ENCODE measurements at regions of chr10 and their contacts with region 1.

Region 1: DNA sequence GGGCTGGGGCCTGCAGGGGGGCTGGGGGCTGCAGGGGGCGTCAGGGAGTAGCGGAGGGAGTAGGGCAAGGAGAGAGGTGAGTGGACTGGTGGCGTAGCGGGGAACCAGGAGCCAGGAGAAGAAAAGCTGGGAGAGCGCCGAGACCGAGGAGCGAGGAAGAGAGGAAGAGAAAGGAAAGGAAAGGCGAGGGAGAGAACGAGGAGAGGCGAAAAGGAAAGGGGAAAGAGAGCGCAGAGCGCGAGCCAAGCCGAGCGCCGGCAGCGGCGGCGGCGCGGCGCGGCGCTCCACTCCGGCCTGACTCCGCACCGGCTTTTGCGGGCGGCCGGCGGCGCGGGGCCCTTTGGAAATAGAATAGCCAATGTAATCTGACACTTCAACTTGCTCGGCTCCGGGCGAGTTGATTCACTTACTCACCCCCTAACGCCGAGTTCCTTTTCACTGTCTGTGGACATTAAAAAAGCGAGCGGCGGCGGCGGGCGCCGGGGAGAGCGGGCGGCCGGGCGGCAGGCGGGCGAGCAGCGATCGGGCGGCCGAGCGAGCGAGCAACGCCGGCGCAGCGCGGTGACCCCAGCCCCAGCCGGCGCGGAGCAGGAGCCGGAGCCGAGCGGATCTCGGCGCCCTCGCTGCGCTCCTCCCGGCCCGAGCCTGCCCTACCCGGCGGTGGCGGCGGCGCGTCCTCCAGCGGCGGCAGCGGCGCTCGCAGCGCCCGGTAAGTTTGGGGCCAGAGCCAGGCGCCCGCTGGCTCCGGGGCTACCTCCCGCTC is at the start of gene ZMIZ1:
- ATAC-seq: peak; percentile 20 to 62 (median 36)
- H3K4me3 ChIP-seq: peak within 1 kb of the TSS; percentile 59 to 88 (median 69)
- H3K27ac ChIP-seq: peak within 1 kb of the TSS; percentile 79 to 87
- H3K4me1 ChIP-seq: peaks cover 32 to 34% of the 10 kb centered on the region in 2 donors
- total RNA-seq, gene ZMIZ1: 15.8 to 79.9 (median 50.0) TPM

Region 2: DNA sequence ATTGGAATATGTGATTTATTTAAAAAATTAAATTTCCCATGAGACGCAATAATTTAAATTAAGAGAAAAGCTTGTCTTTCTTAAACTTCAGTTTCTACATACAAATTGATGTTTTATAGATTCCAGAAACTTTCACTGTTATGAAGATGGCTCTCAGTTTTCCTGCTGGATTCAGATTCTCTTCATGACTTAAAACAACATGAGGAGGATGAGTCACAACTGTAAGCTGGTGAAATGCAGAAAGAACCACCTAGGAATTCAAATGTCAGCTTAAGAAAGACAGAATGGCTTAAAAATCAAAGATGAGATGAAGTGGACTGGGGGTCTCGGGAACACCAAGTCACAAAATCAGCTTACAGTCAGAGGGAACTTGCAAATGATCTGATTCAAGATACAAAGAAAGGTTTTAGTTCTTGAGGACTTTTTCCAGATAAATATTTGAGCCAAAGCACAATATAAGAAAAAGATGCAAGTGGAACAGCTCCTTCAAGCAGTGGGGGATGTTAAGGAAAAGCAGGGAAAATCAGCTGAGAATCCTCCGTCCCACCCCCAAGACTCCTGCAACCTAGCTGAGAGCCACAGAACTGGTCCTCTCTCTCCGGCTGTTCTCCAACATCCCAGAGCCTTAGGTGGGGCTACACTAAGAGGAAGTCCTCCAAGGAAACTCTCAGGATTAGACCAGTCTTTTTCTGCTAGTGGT is 1711.0 kb before region 1 on chr10:
- in situ Hi-C with region 1: no loop called
- ATAC-seq: peak in 6 of 8 experiments; percentile 3 to 50 (median 33)
- H3K4me3 ChIP-seq: no peak overlapping the region
- H3K27ac ChIP-seq: no peak overlapping the region
- H3K4me1 ChIP-seq: no peaks in the 10 kb centered on the region

Region 3: GRCh38 chr10:78614267-78614666 is 454.5 kb before region 1 on chr10:
- in situ Hi-C with region 1: no loop called
- ATAC-seq: peak in 7 of 8 experiments; percentile 11 to 72 (median 25)
- H3K4me3 ChIP-seq: no peak overlapping the region
- H3K27ac ChIP-seq: no peak overlapping the region
- H3K4me1 ChIP-seq: peaks cover 14 to 16% of the 10 kb centered on the region in 2 donors

Region 4: GRCh38 chr10:78805176-78805575 is 263.6 kb before region 1 on chr10:
- in situ Hi-C with region 1: loop called in 1 of 9 experiments (anchors 25 kb)
- ATAC-seq: peak in 5 of 8 experiments; percentile 20 to 83 (median 72)
- H3K4me3 ChIP-seq: no peak overlapping the region
- H3K27ac ChIP-seq: no peak overlapping the region
- H3K4me1 ChIP-seq: peaks cover 35 to 39% of the 10 kb centered on the region in 2 donors